Heart right ventricle (tissue), 16 donors: ENCODE measurements at regions of chr2 and their contacts with region 1.

Region 1: GRCh38 chr2:16114836-16115235 is 174.5 kb downstream of the MYCN start:
- DNase-seq: no peak
- ATAC-seq: no peak
- H3K4me3 ChIP-seq: no peak overlapping the region
- H3K27ac ChIP-seq: no peak overlapping the region
- H3K4me1 ChIP-seq: no peaks in the 10 kb centered on the region
- H3K27me3 ChIP-seq: peaks cover 0 to 4% (median 1%) of the 10 kb centered on the region in 7 donors
- CTCF ChIP-seq: no peak

Region 2: GRCh38 chr2:16055848-16056580 is 58.8 kb before region 1 on chr2:
- intact Hi-C with region 1: loop called in 1 of 10 experiments (anchors 2 kb)
- DNase-seq: no peak
- ATAC-seq: peak in 5 of 8 donors; percentile 24 to 59 (median 38)
- H3K4me3 ChIP-seq: no peak overlapping the region
- H3K27ac ChIP-seq: no peak overlapping the region
- H3K4me1 ChIP-seq: peaks cover 0 to 13% (median 11%) of the 10 kb centered on the region in 9 donors
- H3K27me3 ChIP-seq: peaks cover 0 to 9% (median 0%) of the 10 kb centered on the region in 7 donors
- CTCF ChIP-seq: no peak

Region 3: DNA sequence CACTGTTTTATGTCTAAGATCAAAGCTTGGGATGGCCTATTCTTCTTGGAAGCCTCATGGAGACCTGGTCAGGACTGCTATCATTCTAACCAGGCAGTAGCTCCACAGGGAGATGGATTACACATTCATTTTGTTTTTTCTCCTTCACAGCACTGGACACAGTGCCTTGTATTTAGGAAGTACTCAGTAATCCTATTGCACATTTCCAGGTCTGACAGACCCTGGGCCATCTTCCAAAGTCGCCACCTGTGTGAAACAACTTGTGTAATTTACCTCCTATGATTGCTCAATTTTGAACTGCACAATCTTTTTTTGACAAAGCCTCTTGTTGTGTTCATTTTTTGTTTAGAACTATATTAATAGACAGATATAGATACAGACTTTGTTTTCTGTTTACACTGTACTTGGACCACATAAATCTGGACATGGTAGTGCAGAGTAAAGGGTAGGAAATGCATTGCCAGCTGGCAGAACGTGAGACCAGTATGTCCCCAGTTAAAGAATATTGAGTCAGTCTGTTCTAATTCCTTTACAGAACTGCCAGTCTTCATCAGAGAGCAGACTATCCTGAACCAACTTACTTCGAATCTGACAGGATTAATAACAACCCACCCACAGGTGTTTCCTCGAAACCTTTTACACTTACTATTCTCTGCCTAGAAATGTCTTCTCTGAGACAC is 828.6 kb after region 1 on chr2:
- intact Hi-C with region 1: loop called in 1 of 10 experiments (anchors 5 kb)
- DNase-seq: no peak
- ATAC-seq: peak in 1 of 8 donors; percentile 46
- H3K4me3 ChIP-seq: no peak overlapping the region
- H3K27ac ChIP-seq: no peak overlapping the region
- H3K4me1 ChIP-seq: no peaks in the 10 kb centered on the region
- H3K27me3 ChIP-seq: no peaks in the 10 kb centered on the region
- CTCF ChIP-seq: no peak